ENCODE measurements at regions of chr13 and their contacts with region 1.

Region 1: DNA sequence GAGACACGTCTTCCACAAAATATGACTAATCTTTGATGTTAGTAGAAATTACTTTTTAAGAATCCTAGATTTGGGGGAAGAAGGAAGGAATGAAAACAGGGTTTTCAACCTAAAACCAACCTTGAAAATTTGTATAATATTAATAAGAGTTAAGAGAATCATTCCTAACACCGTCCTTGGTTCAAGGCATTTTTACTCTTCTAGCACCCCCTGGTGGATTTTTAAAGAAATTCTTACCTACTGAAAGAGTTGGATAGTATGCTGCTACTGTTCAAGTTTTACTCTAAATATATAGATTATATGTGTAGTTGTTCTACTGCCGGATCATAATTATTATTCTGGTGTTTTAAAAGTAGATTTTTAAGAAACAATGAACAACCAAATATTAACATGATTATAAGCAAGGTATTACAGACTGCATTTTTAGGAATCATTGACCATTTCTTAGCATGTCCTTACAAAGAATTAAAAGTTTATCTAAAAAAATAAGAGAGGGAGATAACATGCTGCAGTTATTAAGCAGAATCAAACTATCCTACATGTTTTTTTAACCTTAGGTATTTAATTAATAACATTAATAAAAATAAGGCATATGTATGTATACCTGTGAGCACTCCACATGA is 7.4 kb upstream of the SLITRK6 start:
- DNase-seq: no peak
- H3K4me3 ChIP-seq: no peak overlapping the region
- H3K27ac ChIP-seq: no peak overlapping the region
- H3K4me1 ChIP-seq: no peaks in the 10 kb centered on the region
- H3K27me3 ChIP-seq: no peaks in the 10 kb centered on the region
- CTCF ChIP-seq: peak in 2 of 3 experiments; percentile 48 to 58

Region 2: DNA sequence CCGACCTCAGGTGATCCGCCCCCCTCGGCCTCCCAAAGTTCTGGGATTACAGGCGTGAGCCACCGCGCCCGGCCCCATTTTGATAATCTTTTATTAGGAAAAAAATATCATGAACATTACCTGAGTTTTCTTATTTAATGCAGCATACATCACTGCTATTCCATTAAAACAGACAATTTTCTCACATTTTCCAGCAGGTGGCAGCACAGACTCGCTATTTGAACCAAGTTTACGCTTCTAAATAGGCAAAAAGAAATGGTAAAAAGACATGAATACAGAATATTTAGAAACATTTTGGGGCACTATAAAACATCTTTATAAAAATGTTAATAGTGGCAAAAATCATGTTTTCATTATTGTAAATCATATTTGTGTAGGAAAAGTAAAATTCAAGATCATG is 910.5 kb before region 1 on chr13:
- intact Hi-C with region 1: loop called (anchors 2 kb)
- DNase-seq: no peak
- H3K4me3 ChIP-seq: no peak overlapping the region
- H3K27ac ChIP-seq: no peak overlapping the region
- H3K4me1 ChIP-seq: no peaks in the 10 kb centered on the region
- H3K27me3 ChIP-seq: no peaks in the 10 kb centered on the region
- CTCF ChIP-seq: peak in 2 of 3 experiments; percentile 50 to 55

Region 3: DNA sequence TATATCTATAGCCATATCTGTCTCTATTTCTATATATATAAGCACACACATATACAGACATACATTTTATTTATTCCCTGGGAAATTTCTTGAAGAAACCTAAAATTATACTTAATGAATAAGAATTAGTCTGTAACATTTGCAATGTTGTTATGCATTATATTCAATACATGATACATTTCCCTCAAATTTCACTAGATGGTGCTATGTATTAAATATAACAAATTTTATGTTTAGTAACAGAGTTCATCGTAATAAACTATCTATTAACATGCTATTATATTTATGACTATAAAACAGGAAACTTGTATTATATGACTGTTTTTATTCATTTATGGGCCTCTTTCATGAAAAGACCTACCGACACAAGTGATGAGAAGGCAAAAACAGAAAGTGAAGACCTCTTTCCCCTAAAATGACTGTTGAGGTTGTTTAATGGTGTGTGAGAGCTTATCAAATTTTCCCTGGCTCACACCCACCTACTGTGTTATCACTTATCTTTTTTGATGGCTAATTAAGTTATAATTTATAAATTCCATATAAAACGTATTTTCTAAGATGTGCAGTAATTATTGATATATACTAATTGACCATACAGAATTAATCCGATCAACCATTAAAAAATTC is 889.3 kb before region 1 on chr13:
- intact Hi-C with region 1: loop called (anchors 5 kb)
- DNase-seq: no peak
- H3K4me3 ChIP-seq: no peak overlapping the region
- H3K27ac ChIP-seq: no peak overlapping the region
- H3K4me1 ChIP-seq: no peaks in the 10 kb centered on the region
- H3K27me3 ChIP-seq: no peaks in the 10 kb centered on the region
- CTCF ChIP-seq: peak in 1 of 3 experiments; percentile 37

Measured in ascending aorta (tissue), 2 donors.